Calu3 (cell line): ENCODE measurements at regions of chr15 and their contacts with region 1.

Region 1: GRCh38 chr15:98085003-98085639 is 124.6 kb downstream of the ARRDC4 start:
- DNase-seq: peak; percentile 61
- H3K4me3 Mint-ChIP-seq: no peak overlapping the region
- H3K27ac Mint-ChIP-seq: no peak overlapping the region
- H3K4me1 Mint-ChIP-seq: no peaks in the 10 kb centered on the region
- H3K27me3 Mint-ChIP-seq: no peaks in the 10 kb centered on the region
- CTCF ChIP-seq: peak; percentile 35

Region 2: DNA sequence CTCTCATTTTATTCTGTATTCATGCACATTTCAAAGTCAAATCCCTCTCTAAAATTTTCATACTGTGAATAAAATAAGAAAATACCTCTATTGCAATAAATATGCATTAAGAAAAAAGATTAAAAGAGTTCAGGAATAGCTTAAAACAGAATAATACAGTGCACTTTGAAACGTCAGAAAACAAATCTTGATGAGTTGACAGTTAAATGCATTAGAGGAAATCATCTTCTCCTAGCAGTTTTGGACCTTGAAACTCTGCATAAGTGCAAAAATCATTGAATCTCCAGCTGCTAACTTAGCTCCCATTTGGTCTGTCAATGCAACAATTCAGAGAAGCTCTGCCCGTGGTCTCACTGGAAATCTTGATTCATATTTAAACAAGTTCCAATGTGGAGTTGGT is 223.6 kb before region 1 on chr15:
- CTCF ChIA-PET with region 1: interaction called, 11 read pairs
- intact Hi-C with region 1: no loop called
- DNase-seq: no peak
- H3K4me3 Mint-ChIP-seq: no peak overlapping the region
- H3K27ac Mint-ChIP-seq: no peak overlapping the region
- H3K4me1 Mint-ChIP-seq: no peaks in the 10 kb centered on the region
- H3K27me3 Mint-ChIP-seq: no peaks in the 10 kb centered on the region
- CTCF ChIP-seq: no peak

Region 3: DNA sequence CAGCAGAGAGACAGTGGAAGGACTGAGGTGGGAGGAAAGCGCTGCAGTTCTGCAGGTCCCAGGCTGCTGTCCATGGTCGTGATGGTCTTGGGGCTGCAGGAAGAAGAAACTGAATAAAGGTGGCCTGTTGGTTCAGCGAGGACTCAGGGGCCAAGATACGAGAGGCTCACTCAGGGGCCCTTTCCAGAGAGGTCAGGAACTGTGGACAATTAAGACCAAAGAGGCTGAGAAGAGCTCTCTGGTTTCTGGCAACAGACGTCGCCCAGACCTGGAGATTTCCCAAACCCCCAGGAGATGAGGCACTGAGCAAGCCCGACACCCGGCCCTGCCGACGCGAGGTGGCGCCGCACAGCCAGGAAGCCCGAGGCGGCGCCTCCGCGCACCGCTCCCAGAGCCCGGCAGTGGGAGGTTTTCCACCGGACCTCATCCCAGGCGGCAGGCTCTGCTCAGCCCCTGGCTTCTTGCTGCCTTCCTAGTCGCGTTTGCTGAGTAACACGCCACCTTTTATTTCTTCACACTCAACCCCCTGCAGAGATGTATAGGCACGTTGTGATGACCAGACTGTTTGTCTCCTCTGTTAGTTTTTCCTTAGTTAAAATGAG is 181.0 kb before region 1 on chr15:
- CTCF ChIA-PET with region 1: interaction called, 4 read pairs
- intact Hi-C with region 1: loop called (anchors 1 kb)
- DNase-seq: peak; percentile 89
- H3K4me3 Mint-ChIP-seq: no peak overlapping the region
- H3K27ac Mint-ChIP-seq: no peak overlapping the region
- H3K4me1 Mint-ChIP-seq: no peaks in the 10 kb centered on the region
- H3K27me3 Mint-ChIP-seq: peaks cover 74% of the 10 kb centered on the region
- CTCF ChIP-seq: peak; percentile 64

Region 4: GRCh38 chr15:97995881-97996603 is 89.1 kb before region 1 on chr15:
- CTCF ChIA-PET with region 1: interaction called, 3 read pairs
- intact Hi-C with region 1: loop called (anchors 2 kb)
- DNase-seq: peak; percentile 65
- H3K4me3 Mint-ChIP-seq: peak overlapping the region; percentile 21
- H3K27ac Mint-ChIP-seq: peak overlapping the region; percentile 60
- H3K4me1 Mint-ChIP-seq: peaks cover 20% of the 10 kb centered on the region
- H3K27me3 Mint-ChIP-seq: no peaks in the 10 kb centered on the region
- CTCF ChIP-seq: peak; percentile 69